Activated CD8-positive, alpha-beta T cell treated with anti-CD3 and anti-CD28 coated beads, Interleukin-2, amount 10 ng/mL, durations not matched to agents 7 days and 5 days (primary cell): ENCODE measurements at regions of chr3 and their contacts with region 1.

Region 1: GRCh38 chr3:97719156-97719821 is 45.3 kb upstream of the ARL6 start:
- DNase-seq: peak; percentile 74
- ATAC-seq: peak; percentile 85
- H3K4me3 Mint-ChIP-seq: no peak overlapping the region
- H3K27ac Mint-ChIP-seq: no peak overlapping the region
- H3K4me1 Mint-ChIP-seq: no peaks in the 10 kb centered on the region
- H3K27me3 Mint-ChIP-seq: peaks cover 13% of the 10 kb centered on the region

Region 2: GRCh38 chr3:97736928-97737327 is 17.6 kb after region 1 on chr3:
- CTCF ChIA-PET with region 1: interaction called, 12 read pairs
- POLR2A ChIA-PET with region 1: interaction called, 3 read pairs
- DNase-seq: no peak
- ATAC-seq: no peak
- H3K4me3 Mint-ChIP-seq: no peak overlapping the region
- H3K27ac Mint-ChIP-seq: no peak overlapping the region
- H3K4me1 Mint-ChIP-seq: no peaks in the 10 kb centered on the region
- H3K27me3 Mint-ChIP-seq: peaks cover 28% of the 10 kb centered on the region